Head of caudate nucleus (tissue), 42 donors: ENCODE measurements at regions of chr18 and their contacts with region 1.

Region 1: GRCh38 chr18:58529714-58530354 is 99.1 kb downstream of the ALPK2 start:
- DNase-seq: peak; percentile 18 to 82 (median 57)

Region 2: DNA sequence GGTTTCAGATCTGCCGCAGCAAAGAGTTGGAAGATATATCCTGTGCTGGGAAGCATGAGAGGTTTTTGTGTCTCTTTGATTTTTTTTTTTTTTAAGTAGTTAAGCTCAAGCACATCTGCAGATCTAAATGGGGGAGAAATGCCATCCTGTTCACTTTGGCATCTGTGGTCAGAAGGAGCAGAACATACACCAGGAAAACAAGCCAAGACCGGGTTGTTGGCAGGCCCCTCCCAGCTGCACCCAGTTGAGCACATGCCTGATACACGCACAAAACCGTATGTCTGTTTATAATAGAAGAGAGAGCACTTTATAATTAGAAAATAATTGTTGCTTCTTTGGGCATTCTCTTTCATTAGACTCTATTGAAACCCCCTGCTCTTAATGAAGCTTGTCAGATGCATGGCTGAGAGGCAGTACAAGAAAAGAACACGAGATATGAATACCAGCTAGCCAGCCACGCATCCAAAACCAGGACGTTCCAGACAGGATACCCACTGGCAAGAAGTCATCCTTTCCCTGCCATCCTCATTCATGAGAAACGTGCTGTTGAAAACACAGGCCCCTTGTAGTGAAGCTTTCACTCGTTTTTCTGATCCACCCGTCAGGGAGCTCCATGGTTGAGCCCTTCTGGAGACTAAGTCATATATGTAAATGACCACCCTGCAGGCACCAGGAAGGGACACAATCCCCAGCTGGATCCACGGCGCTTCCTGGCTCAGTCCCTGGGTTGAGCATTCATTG is 53.1 kb before region 1 on chr18:
- intact Hi-C with region 1: no loop called
- DNase-seq: peak in 2 of 42 donors; percentile 19 to 26

Region 3: GRCh38 chr18:58768293-58768974 is 238.6 kb after region 1 on chr18:
- intact Hi-C with region 1: loop called (anchors 10 kb)
- DNase-seq: peak; percentile 65 to 92 (median 85)